Activated CD4-positive, alpha-beta T cell treated with anti-CD3 and anti-CD28 coated beads, Interleukin-2, amount 10 ng/mL, durations not matched to agents 24 days and 14 days (primary cell): ENCODE measurements at regions of chr18 and their contacts with region 1.

Region 1: GRCh38 chr18:62368100-62368499 is 43.0 kb downstream of the TNFRSF11A start:
- DNase-seq: no peak
- H3K4me3 Mint-ChIP-seq: peak overlapping the region; percentile 32
- H3K27ac Mint-ChIP-seq: peak overlapping the region; percentile 85
- H3K4me1 Mint-ChIP-seq: peaks cover 48% of the 10 kb centered on the region
- H3K27me3 Mint-ChIP-seq: no peaks in the 10 kb centered on the region

Region 2: GRCh38 chr18:62339106-62339988 is 28.8 kb before region 1 on chr18:
- intact Hi-C with region 1: loop called (anchors 1 kb)
- DNase-seq: peak; percentile 65
- H3K4me3 Mint-ChIP-seq: peak overlapping the region; percentile 59
- H3K27ac Mint-ChIP-seq: peak overlapping the region; percentile 86
- H3K4me1 Mint-ChIP-seq: peaks cover 27% of the 10 kb centered on the region
- H3K27me3 Mint-ChIP-seq: no peaks in the 10 kb centered on the region

Region 3: DNA sequence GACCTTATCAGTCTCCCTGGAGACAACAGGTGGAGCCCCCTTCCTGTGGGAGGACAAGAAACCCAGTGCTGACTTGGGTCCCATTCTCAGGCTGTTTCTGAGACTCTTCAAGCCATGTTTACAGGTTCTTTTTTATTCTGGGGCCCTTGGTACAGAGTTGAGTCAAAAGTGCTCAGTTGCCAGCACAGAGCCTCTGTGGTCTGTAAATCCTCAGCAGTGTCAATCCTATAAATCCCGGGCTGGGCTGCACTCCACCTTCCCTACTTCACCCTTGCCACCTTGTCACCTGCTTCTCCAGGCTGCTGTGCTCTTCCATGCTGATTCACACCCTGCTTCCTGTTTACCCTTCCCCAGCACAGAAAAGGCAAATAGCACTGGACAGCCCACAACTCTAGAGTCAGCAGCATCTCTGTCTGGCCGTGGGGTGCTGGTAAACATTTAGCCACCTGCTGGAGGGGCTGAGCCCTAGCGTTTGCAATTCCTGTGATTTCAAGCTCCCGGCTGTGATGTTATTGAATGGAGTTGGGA is 31.7 kb after region 1 on chr18:
- intact Hi-C with region 1: loop called (anchors 1 kb)
- DNase-seq: no peak
- H3K4me3 Mint-ChIP-seq: peak overlapping the region; percentile 33
- H3K27ac Mint-ChIP-seq: peak overlapping the region; percentile 75
- H3K4me1 Mint-ChIP-seq: peaks cover 36% of the 10 kb centered on the region
- H3K27me3 Mint-ChIP-seq: no peaks in the 10 kb centered on the region

Region 4: DNA sequence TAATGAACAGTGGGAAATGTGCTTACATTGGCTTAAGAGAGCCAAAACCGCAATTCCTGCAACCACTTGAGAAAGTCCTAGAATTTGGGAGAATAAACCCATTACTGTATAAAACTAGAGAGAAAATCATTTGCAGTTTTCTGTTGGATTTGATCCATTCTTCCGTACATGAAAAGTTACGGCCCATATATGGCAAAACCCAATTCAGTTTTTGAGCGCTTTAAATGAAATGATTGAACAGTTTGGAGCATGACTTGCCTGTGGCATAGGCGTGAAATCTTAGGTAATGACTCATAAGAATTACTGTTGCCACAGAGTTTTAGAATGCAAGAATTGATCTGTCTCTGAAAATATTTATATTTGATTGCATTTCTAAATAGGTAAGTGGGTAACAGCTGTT is 399.2 kb after region 1 on chr18:
- intact Hi-C with region 1: no loop called
- DNase-seq: no peak
- H3K4me3 Mint-ChIP-seq: no peak overlapping the region
- H3K27ac Mint-ChIP-seq: no peak overlapping the region
- H3K4me1 Mint-ChIP-seq: peaks cover 23% of the 10 kb centered on the region
- H3K27me3 Mint-ChIP-seq: no peaks in the 10 kb centered on the region